ENCODE measurements at regions of chr16 and their contacts with region 1.

Region 1: DNA sequence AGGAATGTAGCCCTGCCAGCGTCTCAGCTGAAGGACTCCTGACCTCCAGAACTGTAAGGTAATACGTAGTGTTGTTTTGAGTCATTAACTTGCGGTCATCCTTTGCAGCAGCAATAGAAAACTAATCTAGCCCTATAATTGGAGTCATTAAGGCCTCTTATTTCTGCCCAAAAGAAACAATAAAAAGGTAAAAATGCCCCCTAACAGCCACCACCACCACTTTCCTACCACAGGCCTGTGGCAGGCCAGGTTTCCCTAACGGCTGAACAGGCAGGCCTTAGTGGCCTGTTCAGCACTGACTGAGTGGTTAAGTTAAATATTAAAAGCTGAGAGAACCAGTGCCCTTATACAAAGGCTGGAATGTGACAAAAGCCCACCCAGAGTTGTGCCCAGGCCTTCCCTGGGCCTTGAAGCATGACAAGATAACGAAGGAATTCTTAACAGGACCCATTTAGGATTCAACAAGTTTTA is 286.5 kb upstream of the ERCC4 start:
- DNase-seq: peak; percentile 4
- ATAC-seq: peak; percentile 76
- H3K4me3 ChIP-seq: no peak overlapping the region
- H3K27ac ChIP-seq: no peak overlapping the region
- H3K4me1 ChIP-seq: no peaks in the 10 kb centered on the region
- H3K27me3 ChIP-seq: no peaks in the 10 kb centered on the region
- CTCF ChIP-seq: no peak
- EP300 ChIP-seq: no peak
- POLR2A ChIP-seq: no peak
- RAD21 ChIP-seq: no peak

Region 2: GRCh38 chr16:13542284-13542683 is 91.1 kb before region 1 on chr16:
- CTCF ChIA-PET with region 1: no interaction called
- POLR2A ChIA-PET with region 1: no interaction called
- RAD21 ChIA-PET with region 1: no interaction called
- SMC1A ChIA-PET with region 1: no interaction called
- in situ Hi-C with region 1: no loop called
- intact Hi-C with region 1: no loop called
- DNase-seq: no peak
- ATAC-seq: no peak
- H3K4me3 ChIP-seq: no peak overlapping the region
- H3K27ac ChIP-seq: no peak overlapping the region
- H3K4me1 ChIP-seq: no peaks in the 10 kb centered on the region
- H3K27me3 ChIP-seq: no peaks in the 10 kb centered on the region
- CTCF ChIP-seq: no peak
- EP300 ChIP-seq: no peak
- POLR2A ChIP-seq: no peak
- RAD21 ChIP-seq: no peak

Region 3: DNA sequence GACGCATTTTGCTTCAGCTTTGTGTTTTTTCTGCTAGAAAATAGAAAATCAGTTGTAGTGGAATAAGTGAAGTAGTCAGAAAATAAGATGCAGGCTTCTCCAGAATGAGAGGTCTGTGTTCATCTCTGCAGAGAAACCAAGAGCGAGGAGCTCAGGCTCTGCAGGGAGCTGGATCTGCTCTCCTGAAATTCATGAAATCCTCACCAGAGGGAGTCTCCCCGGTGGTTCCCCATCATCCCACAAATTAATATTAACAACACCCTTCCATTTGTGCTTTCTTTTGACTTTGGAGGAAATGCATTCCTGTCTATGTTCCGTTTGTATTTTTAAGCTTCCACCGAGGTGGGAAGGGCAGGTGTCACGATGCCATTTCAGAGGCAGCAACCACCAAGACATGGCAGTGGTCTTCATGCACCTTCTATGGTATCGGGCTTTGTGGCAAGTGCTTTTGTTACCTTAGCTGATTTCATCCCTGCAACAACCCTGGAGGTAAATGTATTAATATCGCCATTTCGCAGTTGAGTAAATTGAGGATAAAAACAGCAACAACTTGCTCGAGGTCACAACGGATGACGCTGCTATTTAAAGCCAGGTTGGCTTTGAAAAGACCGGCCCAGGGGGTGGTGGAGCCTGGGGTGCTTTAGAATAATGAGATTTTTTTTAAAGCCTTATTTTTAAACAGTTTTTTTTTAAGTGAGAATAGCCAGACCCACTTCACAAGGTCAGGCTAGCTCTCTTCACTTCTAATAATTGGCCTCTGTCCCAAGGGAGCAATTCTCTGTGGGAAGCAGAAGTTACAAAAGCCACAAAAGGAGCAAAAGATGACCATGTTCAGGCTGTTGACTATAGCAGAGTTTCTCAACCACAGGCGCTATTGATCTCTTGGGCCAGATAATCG is 81.1 kb before region 1 on chr16:
- CTCF ChIA-PET with region 1: no interaction called
- POLR2A ChIA-PET with region 1: no interaction called
- RAD21 ChIA-PET with region 1: interaction called, 4 read pairs
- SMC1A ChIA-PET with region 1: interaction called, 7 read pairs
- in situ Hi-C with region 1: no loop called
- intact Hi-C with region 1: loop called (anchors 2 kb)
- DNase-seq: peak; percentile 71
- ATAC-seq: no peak; the same call in 1 of the 3 replicates
- H3K4me3 ChIP-seq: no peak overlapping the region
- H3K27ac ChIP-seq: no peak overlapping the region
- H3K4me1 ChIP-seq: no peaks in the 10 kb centered on the region
- H3K27me3 ChIP-seq: no peaks in the 10 kb centered on the region
- CTCF ChIP-seq: no peak
- EP300 ChIP-seq: 0 out of 4 replicates have a peak, but pooled peaks of 1 of the 2 experiments have one; percentile 46
- POLR2A ChIP-seq: no peak
- RAD21 ChIP-seq: no peak

Region 4: DNA sequence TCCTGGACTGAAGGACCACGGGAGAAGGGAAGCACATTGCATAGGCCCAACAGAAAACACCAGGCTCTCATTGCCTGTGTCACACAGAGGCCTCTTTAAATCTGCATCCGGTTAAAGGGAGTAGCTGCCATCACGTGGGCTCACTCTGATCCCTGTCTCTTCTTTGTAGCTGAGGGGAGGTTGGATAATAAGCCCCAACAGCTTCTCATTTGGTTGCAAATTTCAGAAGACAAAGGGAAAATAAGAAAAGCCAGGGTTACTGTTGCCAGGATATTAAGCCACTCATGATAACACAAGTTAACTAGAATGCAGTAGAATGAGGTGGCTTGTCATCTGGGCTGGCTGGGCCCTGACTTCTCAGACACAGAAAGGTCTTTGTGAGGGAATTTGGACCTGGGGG is 38.6 kb before region 1 on chr16:
- CTCF ChIA-PET with region 1: no interaction called
- POLR2A ChIA-PET with region 1: no interaction called
- RAD21 ChIA-PET with region 1: no interaction called
- SMC1A ChIA-PET with region 1: no interaction called
- in situ Hi-C with region 1: no loop called
- intact Hi-C with region 1: no loop called
- DNase-seq: no peak
- ATAC-seq: no peak
- H3K4me3 ChIP-seq: no peak overlapping the region
- H3K27ac ChIP-seq: no peak overlapping the region
- H3K4me1 ChIP-seq: no peaks in the 10 kb centered on the region
- H3K27me3 ChIP-seq: 0 out of 4 replicates have a peak, but pooled peaks cover 0 to 1% of the 10 kb centered on the region in 2 experiments
- CTCF ChIP-seq: no peak
- EP300 ChIP-seq: no peak
- POLR2A ChIP-seq: no peak
- RAD21 ChIP-seq: no peak

Region 5: DNA sequence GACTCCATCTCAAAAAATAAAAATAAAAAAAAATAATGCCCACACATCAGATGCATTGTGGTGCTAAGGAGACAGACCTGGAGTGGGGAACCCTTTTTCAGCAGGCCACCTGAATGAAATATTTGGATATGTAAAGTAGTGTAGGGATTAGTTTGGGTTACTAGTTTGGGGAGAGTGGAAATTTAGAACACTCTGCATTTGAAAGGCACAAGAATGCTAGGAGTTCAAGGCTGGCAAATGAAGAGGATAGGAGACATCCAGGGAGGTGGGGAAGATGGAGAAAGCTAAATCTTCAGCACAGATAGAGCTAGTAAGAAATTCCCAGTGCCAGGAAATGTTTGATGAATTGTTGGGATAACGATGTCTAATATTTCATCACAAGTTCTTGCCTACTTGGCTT is 11.8 kb before region 1 on chr16:
- CTCF ChIA-PET with region 1: no interaction called
- POLR2A ChIA-PET with region 1: no interaction called
- RAD21 ChIA-PET with region 1: no interaction called
- SMC1A ChIA-PET with region 1: no interaction called
- in situ Hi-C with region 1: no loop called
- intact Hi-C with region 1: no loop called
- DNase-seq: no peak
- ATAC-seq: no peak
- H3K4me3 ChIP-seq: no peak overlapping the region
- H3K27ac ChIP-seq: no peak overlapping the region
- H3K4me1 ChIP-seq: no peaks in the 10 kb centered on the region
- H3K27me3 ChIP-seq: no peaks in the 10 kb centered on the region
- CTCF ChIP-seq: no peak
- EP300 ChIP-seq: no peak
- POLR2A ChIP-seq: no peak
- RAD21 ChIP-seq: no peak

Region 6: DNA sequence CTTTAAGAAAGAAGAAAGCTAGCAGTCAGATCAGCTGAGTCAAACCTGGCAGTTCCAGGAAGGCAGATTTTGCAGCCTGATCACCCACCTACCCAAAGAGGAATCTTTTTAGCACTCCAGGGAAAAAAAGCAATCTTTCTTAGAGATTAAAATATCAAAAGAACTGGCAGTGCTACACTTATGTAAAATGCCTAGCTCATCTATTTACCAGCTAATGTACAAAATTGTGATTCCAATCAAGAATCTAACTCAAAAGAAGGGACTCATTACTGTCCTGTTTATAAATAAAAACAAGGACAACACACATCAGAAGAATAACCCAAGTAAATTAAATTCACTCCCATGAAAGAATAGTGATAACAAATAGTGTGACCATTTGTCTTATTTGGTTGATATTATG is 64.1 kb after region 1 on chr16:
- CTCF ChIA-PET with region 1: no interaction called
- POLR2A ChIA-PET with region 1: no interaction called
- RAD21 ChIA-PET with region 1: no interaction called
- SMC1A ChIA-PET with region 1: no interaction called
- in situ Hi-C with region 1: loop called (anchors 10 kb)
- intact Hi-C with region 1: no loop called
- DNase-seq: no peak
- ATAC-seq: no peak
- H3K4me3 ChIP-seq: no peak overlapping the region
- H3K27ac ChIP-seq: no peak overlapping the region
- H3K4me1 ChIP-seq: no peaks in the 10 kb centered on the region
- H3K27me3 ChIP-seq: no peaks in the 10 kb centered on the region
- CTCF ChIP-seq: no peak
- EP300 ChIP-seq: no peak
- POLR2A ChIP-seq: no peak
- RAD21 ChIP-seq: no peak

Region 7: GRCh38 chr16:14063618-14064581 is 430.5 kb after region 1 on chr16:
- CTCF ChIA-PET with region 1: no interaction called
- POLR2A ChIA-PET with region 1: no interaction called
- RAD21 ChIA-PET with region 1: no interaction called
- SMC1A ChIA-PET with region 1: no interaction called
- in situ Hi-C with region 1: no loop called
- intact Hi-C with region 1: no loop called
- DNase-seq: no peak
- ATAC-seq: no peak
- H3K4me3 ChIP-seq: no peak overlapping the region
- H3K27ac ChIP-seq: no peak overlapping the region
- H3K4me1 ChIP-seq: no peaks in the 10 kb centered on the region
- H3K27me3 ChIP-seq: no peaks in the 10 kb centered on the region
- CTCF ChIP-seq: no peak
- EP300 ChIP-seq: no peak
- POLR2A ChIP-seq: no peak
- RAD21 ChIP-seq: no peak